Mammary epithelial cell (primary cell): ENCODE measurements at regions of chr12 and their contacts with region 1.

Region 1: DNA sequence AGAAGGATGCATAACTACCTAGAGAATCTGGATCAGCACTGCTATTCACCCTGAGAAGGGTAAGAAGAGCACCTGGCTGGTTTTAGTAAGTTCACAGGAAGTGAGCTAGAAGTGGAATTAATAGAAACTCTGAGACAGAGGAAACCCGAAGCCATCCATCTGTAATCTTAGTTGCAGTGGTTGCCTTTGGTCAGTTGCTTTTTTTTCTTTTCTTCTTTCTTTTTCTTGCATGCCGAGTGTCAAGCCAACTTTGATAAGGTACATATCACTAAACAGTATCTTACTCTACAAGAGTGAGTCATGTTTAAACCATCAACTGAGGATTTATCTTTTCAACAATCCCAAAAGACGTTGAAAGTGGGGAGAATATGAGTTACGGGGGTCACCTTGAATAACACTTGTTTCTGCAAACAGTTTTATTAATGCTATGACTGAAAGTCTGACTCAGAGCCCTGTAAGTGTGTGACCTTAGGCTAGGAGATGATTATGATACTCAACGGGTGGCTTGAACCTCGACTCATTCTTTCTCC is 26.7 kb downstream of the C12orf75 start:
- DNase-seq: no peak
- H3K4me3 ChIP-seq: no peak overlapping the region
- H3K27ac ChIP-seq: no peak overlapping the region
- H3K4me1 ChIP-seq: peaks cover 9% of the 10 kb centered on the region
- H3K27me3 ChIP-seq: no peaks in the 10 kb centered on the region
- CTCF ChIP-seq: no peak

Region 2: DNA sequence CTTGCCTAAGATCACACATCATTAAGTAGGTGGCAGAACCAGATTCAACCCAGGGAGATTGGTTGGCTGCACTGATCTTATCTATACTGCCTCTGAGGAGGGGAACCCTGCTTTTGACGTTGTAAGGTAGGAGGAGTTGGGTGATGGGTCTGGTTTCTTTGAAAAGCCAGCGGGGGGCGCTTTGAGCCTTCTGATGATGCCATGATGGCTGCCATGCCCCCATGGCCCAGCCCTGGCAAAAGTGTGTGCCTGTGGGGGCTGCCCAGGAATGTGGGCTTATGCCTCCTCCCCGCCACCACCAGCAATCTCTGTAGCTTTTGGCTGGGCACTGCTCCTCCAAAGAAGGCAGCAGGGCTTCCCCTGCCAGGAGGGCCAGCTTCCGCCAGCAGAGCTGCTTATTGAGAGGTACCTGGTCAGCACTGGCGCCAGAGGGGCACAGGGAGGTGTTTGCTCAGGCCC is 623.5 kb before region 1 on chr12:
- CTCF ChIA-PET with region 1: no interaction called
- dilution Hi-C with region 1: no loop called
- in situ Hi-C with region 1: no loop called
- intact Hi-C with region 1: no loop called
- DNase-seq: no peak
- H3K4me3 ChIP-seq: no peak overlapping the region
- H3K27ac ChIP-seq: no peak overlapping the region
- H3K4me1 ChIP-seq: peaks cover 8% of the 10 kb centered on the region
- H3K27me3 ChIP-seq: no peaks in the 10 kb centered on the region
- CTCF ChIP-seq: peak in 1 of 2 donors; percentile 38

Region 3: DNA sequence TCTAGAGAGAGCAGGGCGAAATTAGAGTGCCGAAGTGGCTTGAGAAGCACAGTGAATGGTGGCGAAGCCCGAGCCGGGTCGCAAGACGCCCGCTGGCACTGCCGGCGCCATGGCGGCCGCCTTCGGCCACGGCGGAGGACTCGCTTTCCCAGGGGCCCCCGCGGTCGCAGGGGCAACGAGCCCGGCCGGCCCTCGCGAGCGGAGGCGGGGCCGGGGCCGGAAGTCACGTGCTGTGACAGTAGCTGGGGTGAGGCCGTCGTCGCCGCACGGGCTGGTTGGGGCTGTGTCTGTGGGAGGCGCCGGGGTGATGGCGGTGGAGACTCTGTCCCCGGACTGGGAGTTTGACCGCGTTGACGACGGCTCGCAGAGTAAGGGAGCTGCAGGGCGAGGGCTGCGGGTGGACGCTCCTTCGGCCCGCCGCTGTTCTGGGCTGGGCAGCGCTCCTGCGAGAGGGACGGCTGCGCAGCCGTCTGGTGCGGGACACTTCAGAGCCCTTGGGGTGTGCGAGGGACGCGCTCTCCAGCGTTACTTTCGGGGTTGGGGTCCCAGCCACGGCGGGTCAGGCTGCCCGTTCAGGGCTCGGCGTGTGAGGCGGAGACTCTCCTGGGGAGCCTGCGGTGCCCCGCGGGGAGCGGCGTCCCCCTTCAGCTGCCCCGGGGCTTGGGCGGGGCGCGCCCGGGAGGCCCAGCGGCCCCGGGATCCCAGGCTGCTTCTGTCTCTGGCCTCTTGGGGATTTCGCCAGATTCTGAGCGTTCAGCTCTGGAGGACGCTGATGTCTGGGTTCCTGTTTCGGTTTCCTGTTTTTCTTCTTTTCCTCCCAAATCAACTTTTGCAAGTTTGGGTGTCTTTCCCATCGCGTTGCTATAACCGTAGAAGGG is 249.5 kb before region 1 on chr12 and contains the start of gene WASHC4:
- CTCF ChIA-PET with region 1: no interaction called
- dilution Hi-C with region 1: no loop called
- in situ Hi-C with region 1: no loop called
- intact Hi-C with region 1: no loop called
- DNase-seq: peak; percentile 94
- H3K4me3 ChIP-seq: peak within 1 kb of the TSS; percentile 80 to 99 (median 96)
- H3K27ac ChIP-seq: peak within 1 kb of the TSS; percentile 79
- H3K4me1 ChIP-seq: peaks cover 15% of the 10 kb centered on the region
- H3K27me3 ChIP-seq: no peaks in the 10 kb centered on the region
- CTCF ChIP-seq: peak in 1 of 2 donors; percentile 2
- total RNA-seq, gene WASHC4: 48.4 to 75.2 TPM

Region 4: DNA sequence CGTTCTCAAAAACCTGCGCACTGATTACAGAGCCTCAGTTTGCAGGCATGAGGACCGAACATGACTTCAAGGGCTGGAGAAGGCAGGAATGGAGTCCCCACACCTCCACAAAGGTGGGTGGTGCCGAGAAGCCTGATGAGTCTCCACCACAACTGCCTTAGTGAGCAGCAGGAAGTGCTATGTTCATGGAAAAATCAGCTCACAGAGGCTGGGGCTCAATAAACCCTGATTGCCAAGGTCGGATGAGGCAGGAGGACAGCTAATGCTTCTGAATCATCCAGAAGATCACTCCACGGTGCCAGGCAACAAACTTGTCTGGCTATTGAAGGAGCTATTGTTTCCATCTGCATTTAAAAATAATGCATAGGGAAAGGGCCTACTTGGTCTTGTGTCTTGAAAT is 152.3 kb before region 1 on chr12:
- CTCF ChIA-PET with region 1: no interaction called
- dilution Hi-C with region 1: no loop called
- in situ Hi-C with region 1: loop called in 1 of 2 experiments (anchors 25 kb)
- intact Hi-C with region 1: no loop called
- DNase-seq: peak; percentile 71
- H3K4me3 ChIP-seq: no peak overlapping the region
- H3K27ac ChIP-seq: peak overlapping the region; percentile 28
- H3K4me1 ChIP-seq: peaks cover 11% of the 10 kb centered on the region
- H3K27me3 ChIP-seq: no peaks in the 10 kb centered on the region
- CTCF ChIP-seq: no peak

Region 5: DNA sequence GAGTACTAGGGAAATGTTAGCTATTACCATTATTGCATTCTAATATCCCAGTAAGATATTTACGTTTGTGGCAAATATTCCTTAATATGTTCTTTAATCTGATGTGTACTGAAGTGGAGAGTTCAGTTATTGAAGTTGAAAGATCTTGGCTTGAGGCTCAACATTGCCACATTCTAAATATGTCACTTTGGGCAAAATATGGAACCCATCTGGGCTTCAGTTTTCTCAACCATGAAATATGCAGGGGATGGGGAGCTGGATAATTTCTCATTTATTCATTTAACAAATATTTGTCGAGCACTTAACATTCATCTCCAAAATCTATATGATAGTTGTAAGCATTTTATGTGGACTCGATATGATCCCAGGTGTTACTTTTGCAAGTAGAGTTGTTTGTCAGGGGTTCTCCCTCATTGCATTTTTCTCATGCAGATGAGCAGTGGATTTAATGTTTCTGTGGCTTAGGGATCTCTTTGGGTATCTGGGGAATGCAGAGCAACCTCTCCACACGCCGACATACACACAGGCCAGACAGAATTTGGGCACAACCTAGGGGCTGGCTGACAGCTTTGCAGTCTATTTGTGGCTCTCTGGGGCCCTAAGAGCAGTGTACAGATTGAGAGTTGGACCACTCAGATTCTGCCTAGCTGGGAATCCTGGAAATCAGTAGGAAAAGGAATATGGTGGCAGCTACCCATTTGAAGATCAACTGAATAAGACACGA is 94.6 kb before region 1 on chr12:
- CTCF ChIA-PET with region 1: no interaction called
- dilution Hi-C with region 1: no loop called
- in situ Hi-C with region 1: no loop called
- intact Hi-C with region 1: no loop called
- DNase-seq: no peak
- H3K4me3 ChIP-seq: no peak overlapping the region
- H3K27ac ChIP-seq: no peak overlapping the region
- H3K4me1 ChIP-seq: peaks cover 4% of the 10 kb centered on the region
- H3K27me3 ChIP-seq: no peaks in the 10 kb centered on the region
- CTCF ChIP-seq: no peak

Region 6: GRCh38 chr12:105317942-105318621 is 39.1 kb before region 1 on chr12:
- CTCF ChIA-PET with region 1: no interaction called
- dilution Hi-C with region 1: loop called (anchors 5 kb)
- in situ Hi-C with region 1: no loop called
- intact Hi-C with region 1: no loop called
- DNase-seq: no peak
- H3K4me3 ChIP-seq: no peak overlapping the region
- H3K27ac ChIP-seq: no peak overlapping the region
- H3K4me1 ChIP-seq: peaks cover 29% of the 10 kb centered on the region
- H3K27me3 ChIP-seq: no peaks in the 10 kb centered on the region
- CTCF ChIP-seq: no peak